Activated CD4-positive, alpha-beta memory T cell treated with anti-CD3 and anti-CD28 coated beads for 36 hours (primary cell): ENCODE measurements at regions of chr20 and their contacts with region 1.

Region 1: GRCh38 chr20:48718857-48719578 is 108.8 kb downstream of the PREX1 start:
- DNase-seq: peak; percentile 70
- H3K4me3 Mint-ChIP-seq: peak overlapping the region; percentile 54
- H3K27ac Mint-ChIP-seq: peak overlapping the region; percentile 79
- H3K4me1 Mint-ChIP-seq: peaks cover 88% of the 10 kb centered on the region
- H3K27me3 Mint-ChIP-seq: no peaks in the 10 kb centered on the region

Region 2: GRCh38 chr20:48706173-48707015 is 12.6 kb before region 1 on chr20:
- CTCF ChIA-PET with region 1: no interaction called
- POLR2A ChIA-PET with region 1: no interaction called
- intact Hi-C with region 1: loop called (anchors 1 kb)
- DNase-seq: no peak
- H3K4me3 Mint-ChIP-seq: no peak overlapping the region
- H3K27ac Mint-ChIP-seq: peak overlapping the region; percentile 76
- H3K4me1 Mint-ChIP-seq: peaks cover 44% of the 10 kb centered on the region
- H3K27me3 Mint-ChIP-seq: no peaks in the 10 kb centered on the region

Region 3: GRCh38 chr20:48760403-48760983 is 41.5 kb after region 1 on chr20:
- CTCF ChIA-PET with region 1: no interaction called
- POLR2A ChIA-PET with region 1: no interaction called
- intact Hi-C with region 1: loop called (anchors 1 kb)
- DNase-seq: peak; percentile 84
- H3K4me3 Mint-ChIP-seq: peak overlapping the region; percentile 52
- H3K27ac Mint-ChIP-seq: peak overlapping the region; percentile 97
- H3K4me1 Mint-ChIP-seq: peaks cover 86% of the 10 kb centered on the region
- H3K27me3 Mint-ChIP-seq: no peaks in the 10 kb centered on the region

Region 4: GRCh38 chr20:48797275-48797825 is 78.3 kb after region 1 on chr20:
- CTCF ChIA-PET with region 1: no interaction called
- POLR2A ChIA-PET with region 1: no interaction called
- intact Hi-C with region 1: no loop called
- DNase-seq: no peak
- H3K4me3 Mint-ChIP-seq: no peak overlapping the region
- H3K27ac Mint-ChIP-seq: no peak overlapping the region
- H3K4me1 Mint-ChIP-seq: peaks cover 64% of the 10 kb centered on the region
- H3K27me3 Mint-ChIP-seq: no peaks in the 10 kb centered on the region